ENCODE measurements at regions of chr3 and their contacts with region 1.

Region 1: GRCh38 chr3:160413613-160414248 is 14.3 kb downstream of the SMC4 start:
- DNase-seq: peak; percentile 86
- H3K4me3 ChIP-seq: no peak overlapping the region
- H3K27ac ChIP-seq: no peak overlapping the region
- H3K4me1 ChIP-seq: peaks cover 8% of the 10 kb centered on the region
- H3K27me3 ChIP-seq: no peaks in the 10 kb centered on the region
- CTCF ChIP-seq: peak; percentile 64 to 71
- POLR2A ChIP-seq: no peak

Region 2: DNA sequence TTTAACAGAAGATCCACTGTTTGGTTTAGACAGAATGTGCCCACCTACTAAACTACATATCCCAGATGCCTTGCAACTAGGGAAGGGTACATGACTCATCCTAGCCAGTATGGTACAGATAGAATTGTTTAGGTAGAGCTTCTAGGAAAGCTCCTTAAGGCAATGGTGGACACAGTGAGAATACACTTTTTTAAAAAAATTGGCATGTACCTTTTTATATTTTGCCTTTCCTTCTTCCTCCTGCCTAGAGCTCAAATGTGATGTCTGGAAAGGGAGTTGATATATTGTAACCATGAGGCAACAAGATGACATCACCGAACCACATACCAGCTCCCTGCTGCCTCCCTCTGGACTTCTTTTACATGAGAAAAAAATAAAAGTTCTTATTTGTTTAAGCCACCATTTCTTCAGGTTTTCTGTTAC is 202.9 kb before region 1 on chr3:
- CTCF ChIA-PET with region 1: interaction called, 4 read pairs
- POLR2A ChIA-PET with region 1: no interaction called
- dilution Hi-C with region 1: no loop called
- intact Hi-C with region 1: loop called (anchors 5 kb)
- DNase-seq: peak; percentile 33
- H3K4me3 ChIP-seq: no peak overlapping the region
- H3K27ac ChIP-seq: no peak overlapping the region
- H3K4me1 ChIP-seq: no peaks in the 10 kb centered on the region
- H3K27me3 ChIP-seq: peaks cover 0 to 4% of the 10 kb centered on the region in 2 experiments
- CTCF ChIP-seq: peak in 1 of 2 donors; percentile 22
- POLR2A ChIP-seq: no peak

Region 3: DNA sequence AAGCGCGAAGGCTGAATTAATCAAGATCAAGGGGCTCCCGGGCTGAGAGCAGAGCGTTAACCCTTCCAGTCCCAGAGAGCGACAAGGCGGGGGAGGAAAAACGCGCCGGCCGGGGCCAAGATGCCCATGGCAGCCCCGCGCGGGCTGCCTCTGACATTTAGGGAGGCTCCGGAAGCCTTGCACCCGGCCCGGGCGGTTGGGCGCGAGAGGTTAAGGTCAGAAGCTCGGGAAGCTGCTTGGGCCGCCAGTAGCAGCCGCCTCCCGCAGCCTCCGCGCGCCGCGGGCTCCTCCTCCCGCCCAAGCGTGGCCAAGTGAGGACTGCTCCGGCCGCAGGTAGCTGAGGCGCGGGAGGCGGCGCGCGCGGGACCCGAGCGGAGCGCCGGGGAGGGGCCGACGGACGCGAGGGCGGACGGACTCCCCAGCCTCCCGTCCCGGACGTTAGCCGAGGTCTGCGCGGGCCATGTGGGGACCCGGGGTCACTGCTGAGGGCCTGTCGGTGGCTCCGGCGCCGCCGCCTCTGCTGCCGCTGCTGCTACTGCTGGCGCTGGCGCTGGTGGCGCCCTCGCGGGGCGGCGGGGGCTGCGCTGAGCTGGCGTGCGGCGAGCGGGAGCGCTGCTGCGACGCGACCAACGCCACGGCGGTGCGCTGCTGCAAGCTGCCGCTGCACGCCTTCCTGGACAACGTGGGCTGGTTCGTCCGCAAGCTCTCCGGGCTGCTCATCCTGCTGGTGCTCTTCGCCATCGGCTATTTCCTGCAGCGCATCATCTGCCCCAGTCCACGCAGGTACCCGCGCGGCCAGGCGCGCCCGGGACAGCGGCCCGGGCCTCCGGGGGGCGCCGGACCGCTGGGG is 188.3 kb before region 1 on chr3 and contains the start of gene C3orf80:
- CTCF ChIA-PET with region 1: no interaction called
- POLR2A ChIA-PET with region 1: no interaction called
- dilution Hi-C with region 1: no loop called
- intact Hi-C with region 1: loop called (anchors 5 kb)
- DNase-seq: peak; percentile 57
- H3K4me3 ChIP-seq: peak within 1 kb of the TSS; percentile 6 to 43 (median 40)
- H3K27ac ChIP-seq: no peak within 1 kb of the TSS
- H3K4me1 ChIP-seq: peaks cover 7% of the 10 kb centered on the region
- H3K27me3 ChIP-seq: peaks cover 26 to 39% of the 10 kb centered on the region in 2 experiments
- CTCF ChIP-seq: peak in 1 of 2 donors; percentile 3
- POLR2A ChIP-seq: no peak
- total RNA-seq, gene C3orf80: not detected in 2 replicates

Region 4: GRCh38 chr3:160399125-160400029 is 14.4 kb before region 1 on chr3 and contains the starts of genes IFT80 and SMC4:
- CTCF ChIA-PET with region 1: interaction called, 19 read pairs
- POLR2A ChIA-PET with region 1: no interaction called
- dilution Hi-C with region 1: no loop called
- intact Hi-C with region 1: no loop called
- DNase-seq: peak; percentile 97
- H3K4me3 ChIP-seq: peak within 1 kb of the TSS; percentile 77 to 79 (median 78)
- H3K27ac ChIP-seq: peak within 1 kb of the TSS; percentile 76
- H3K4me1 ChIP-seq: peaks cover 16% of the 10 kb centered on the region
- H3K27me3 ChIP-seq: no peaks in the 10 kb centered on the region
- CTCF ChIP-seq: no peak
- POLR2A ChIP-seq: peak; percentile 52
- total RNA-seq, gene IFT80: 21.4 and 22.5 TPM in 2 replicates
- total RNA-seq, gene SMC4: 126 and 153 TPM in 2 replicates

Region 5: DNA sequence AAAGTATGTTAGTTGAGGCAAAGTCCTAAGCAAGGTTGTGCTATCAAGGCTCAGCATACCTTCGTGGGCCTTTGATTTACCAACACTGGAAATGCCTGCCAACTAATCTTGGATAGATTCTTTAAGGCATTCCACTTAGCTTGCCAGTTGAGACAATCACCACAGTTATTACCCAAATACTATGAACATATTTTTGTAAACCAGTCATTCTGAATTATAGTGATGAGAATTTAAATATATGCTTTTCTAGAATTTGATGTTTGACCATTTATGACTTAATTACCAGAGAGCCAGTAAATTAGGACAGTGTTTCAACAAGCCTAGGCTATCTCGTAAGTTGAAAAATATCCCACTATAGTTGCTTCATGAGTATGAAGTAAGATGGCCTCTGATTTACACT is 20.3 kb after region 1 on chr3:
- CTCF ChIA-PET with region 1: interaction called, 6 read pairs
- POLR2A ChIA-PET with region 1: no interaction called
- dilution Hi-C with region 1: no loop called
- intact Hi-C with region 1: loop called (anchors 2 kb)
- DNase-seq: no peak
- H3K4me3 ChIP-seq: no peak overlapping the region
- H3K27ac ChIP-seq: no peak overlapping the region
- H3K4me1 ChIP-seq: no peaks in the 10 kb centered on the region
- H3K27me3 ChIP-seq: no peaks in the 10 kb centered on the region
- CTCF ChIP-seq: no peak
- POLR2A ChIP-seq: no peak

Region 6: DNA sequence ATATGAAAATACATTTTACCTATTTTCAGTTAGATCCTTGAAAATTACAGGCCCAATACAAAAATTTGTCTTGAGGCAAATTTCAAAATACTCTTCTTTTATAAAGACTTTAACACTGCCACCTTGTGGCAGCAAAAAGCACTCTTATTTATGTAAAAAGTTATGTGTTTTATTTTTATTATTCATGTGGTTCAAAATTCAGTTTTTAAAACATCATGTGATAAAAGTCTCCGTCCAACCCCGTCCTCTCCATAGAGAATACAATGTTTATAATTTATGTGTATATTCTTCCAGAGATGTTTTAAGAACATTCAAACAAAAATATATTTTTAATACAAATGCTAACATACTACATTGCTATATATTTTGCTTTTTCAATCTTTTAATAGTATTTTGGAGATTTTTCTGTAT is 72.7 kb after region 1 on chr3:
- CTCF ChIA-PET with region 1: no interaction called
- POLR2A ChIA-PET with region 1: no interaction called
- dilution Hi-C with region 1: no loop called
- intact Hi-C with region 1: loop called (anchors 2 kb)
- DNase-seq: peak; percentile 44
- H3K4me3 ChIP-seq: no peak overlapping the region
- H3K27ac ChIP-seq: no peak overlapping the region
- H3K4me1 ChIP-seq: peaks cover 5% of the 10 kb centered on the region
- H3K27me3 ChIP-seq: no peaks in the 10 kb centered on the region
- CTCF ChIP-seq: peak; percentile 30 to 36
- POLR2A ChIP-seq: no peak

Region 7: DNA sequence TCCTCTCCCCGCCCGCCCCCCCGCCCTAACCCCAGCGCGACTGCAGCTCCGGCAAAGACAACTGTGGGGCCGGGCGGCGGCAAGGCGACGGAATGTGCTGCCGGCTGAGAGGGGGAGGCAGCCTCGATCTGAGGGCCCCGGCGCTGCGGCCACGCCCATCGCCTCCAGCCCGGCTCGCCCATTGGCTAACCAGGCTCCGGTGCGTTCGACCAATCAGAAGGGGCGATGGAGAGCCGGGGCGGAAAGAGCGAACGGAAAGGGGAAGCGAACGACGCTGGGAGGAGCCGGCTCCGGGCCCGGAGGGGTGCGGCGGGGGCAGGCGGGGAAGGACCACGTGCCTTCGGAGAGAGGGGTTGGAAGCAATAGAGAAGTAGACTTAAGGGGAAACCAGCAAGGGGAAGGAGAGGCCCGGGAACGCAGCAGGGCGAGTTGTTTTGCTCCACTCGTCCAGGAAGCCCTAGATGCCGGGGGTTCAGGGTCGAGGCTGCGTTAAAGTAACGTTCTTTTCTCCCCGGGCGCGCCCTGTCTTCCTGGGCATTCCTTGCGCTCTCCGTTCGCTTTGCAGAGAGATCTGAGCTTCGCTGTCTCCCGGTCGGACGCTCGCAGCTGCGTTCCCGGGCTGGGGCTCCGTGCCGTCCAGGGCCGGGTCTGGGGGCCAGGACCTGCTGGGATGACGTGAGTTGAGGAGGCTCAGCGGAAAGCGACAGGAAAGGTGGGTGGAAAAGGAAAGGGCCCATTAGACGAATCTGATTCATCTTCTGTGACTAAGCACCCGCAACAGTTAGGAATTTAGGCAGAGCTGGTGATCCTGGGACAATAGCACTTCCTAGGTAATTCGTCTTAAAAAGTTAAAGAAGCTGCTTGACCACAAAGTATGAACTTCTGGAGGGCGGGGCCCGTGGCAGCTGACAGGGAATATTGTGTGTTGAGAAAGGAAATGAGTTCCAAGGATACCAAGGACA is 152.0 kb after region 1 on chr3 and contains the start of gene KPNA4:
- CTCF ChIA-PET with region 1: no interaction called
- POLR2A ChIA-PET with region 1: no interaction called
- dilution Hi-C with region 1: no loop called
- intact Hi-C with region 1: no loop called
- DNase-seq: peak; percentile 98
- H3K4me3 ChIP-seq: peak within 1 kb of the TSS; percentile 90 to 94 (median 93)
- H3K27ac ChIP-seq: peak within 1 kb of the TSS; percentile 99
- H3K4me1 ChIP-seq: peaks cover 55% of the 10 kb centered on the region
- H3K27me3 ChIP-seq: no peaks in the 10 kb centered on the region
- CTCF ChIP-seq: no peak
- POLR2A ChIP-seq: peak; percentile 70
- total RNA-seq, gene KPNA4: 70.1 and 80.7 TPM in 2 replicates

Region 8: DNA sequence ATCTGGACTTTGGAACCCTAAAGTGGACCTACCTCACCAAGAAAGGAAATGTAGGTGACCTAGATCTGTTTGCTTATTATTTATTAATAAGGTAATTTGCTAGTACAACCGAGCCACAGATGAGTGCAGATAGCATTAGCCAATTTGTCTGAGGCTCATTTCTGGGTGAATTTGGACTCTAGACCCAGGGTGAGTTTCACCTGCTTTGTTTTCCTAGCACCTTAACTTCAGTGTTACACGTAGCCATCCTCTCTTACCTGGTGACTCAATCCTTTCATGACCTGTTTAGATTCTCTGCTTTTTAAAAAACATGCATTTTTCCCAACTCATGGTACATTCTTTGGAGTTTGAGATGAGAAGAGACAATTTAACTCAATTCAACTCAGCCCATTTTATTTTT is 185.1 kb after region 1 on chr3:
- CTCF ChIA-PET with region 1: no interaction called
- POLR2A ChIA-PET with region 1: no interaction called
- dilution Hi-C with region 1: no loop called
- intact Hi-C with region 1: no loop called
- DNase-seq: no peak
- H3K4me3 ChIP-seq: no peak overlapping the region
- H3K27ac ChIP-seq: no peak overlapping the region
- H3K4me1 ChIP-seq: no peaks in the 10 kb centered on the region
- H3K27me3 ChIP-seq: no peaks in the 10 kb centered on the region
- CTCF ChIP-seq: no peak
- POLR2A ChIP-seq: no peak

Region 9: DNA sequence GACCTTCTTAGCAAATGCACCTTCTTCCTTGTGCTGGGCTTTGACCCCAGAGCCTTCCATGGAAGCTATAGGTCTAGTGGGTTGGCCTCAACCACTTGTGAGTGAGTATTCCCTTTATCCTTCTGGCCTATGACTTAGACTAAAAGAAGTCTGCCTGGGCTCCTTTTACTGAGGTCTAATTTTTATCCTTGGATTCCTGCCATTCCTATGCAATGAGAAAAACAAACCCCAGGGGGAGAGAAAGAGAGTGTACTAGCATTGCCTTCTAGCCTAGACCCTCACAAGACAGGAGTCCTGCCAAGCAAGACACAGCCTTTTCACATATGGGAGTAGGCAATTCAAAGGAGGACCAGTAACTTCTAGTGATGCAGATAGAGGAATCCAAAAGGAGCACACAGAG is 497.7 kb after region 1 on chr3:
- CTCF ChIA-PET with region 1: no interaction called
- POLR2A ChIA-PET with region 1: no interaction called
- dilution Hi-C with region 1: no loop called
- intact Hi-C with region 1: no loop called
- DNase-seq: no peak
- H3K4me3 ChIP-seq: no peak overlapping the region
- H3K27ac ChIP-seq: no peak overlapping the region
- H3K4me1 ChIP-seq: no peaks in the 10 kb centered on the region
- H3K27me3 ChIP-seq: peaks cover 3 to 4% of the 10 kb centered on the region in 2 experiments
- CTCF ChIP-seq: no peak
- POLR2A ChIP-seq: no peak

Measured in endothelial cell of umbilical vein (primary cell).